PC-3 (cell line): ENCODE measurements at regions of chr2 and their contacts with region 1.

Region 1: GRCh38 chr2:56505885-56506284 is 322.1 kb downstream of the CCDC85A start:
- DNase-seq: no peak
- ATAC-seq: no peak
- H3K4me3 ChIP-seq: no peak overlapping the region
- H3K27ac ChIP-seq: no peak overlapping the region
- H3K4me1 ChIP-seq: no peaks in the 10 kb centered on the region; the same call in 1 of the 2 replicates
- H3K27me3 ChIP-seq: peaks cover 9% of the 10 kb centered on the region; the same call in 1 of the 2 replicates
- CTCF ChIP-seq: no peak

Region 2: GRCh38 chr2:56338232-56338631 is 167.7 kb before region 1 on chr2:
- CTCF ChIA-PET with region 1: no interaction called
- POLR2A ChIA-PET with region 1: interaction called, 10 read pairs
- intact Hi-C with region 1: no loop called
- DNase-seq: no peak
- ATAC-seq: no peak
- H3K4me3 ChIP-seq: no peak overlapping the region
- H3K27ac ChIP-seq: no peak overlapping the region
- H3K4me1 ChIP-seq: no peaks in the 10 kb centered on the region
- H3K27me3 ChIP-seq: peaks cover 40% of the 10 kb centered on the region
- CTCF ChIP-seq: no peak